Left cardiac atrium (tissue), 4 donors: ENCODE measurements at regions of chr1 and their contacts with region 1.

Region 1: DNA sequence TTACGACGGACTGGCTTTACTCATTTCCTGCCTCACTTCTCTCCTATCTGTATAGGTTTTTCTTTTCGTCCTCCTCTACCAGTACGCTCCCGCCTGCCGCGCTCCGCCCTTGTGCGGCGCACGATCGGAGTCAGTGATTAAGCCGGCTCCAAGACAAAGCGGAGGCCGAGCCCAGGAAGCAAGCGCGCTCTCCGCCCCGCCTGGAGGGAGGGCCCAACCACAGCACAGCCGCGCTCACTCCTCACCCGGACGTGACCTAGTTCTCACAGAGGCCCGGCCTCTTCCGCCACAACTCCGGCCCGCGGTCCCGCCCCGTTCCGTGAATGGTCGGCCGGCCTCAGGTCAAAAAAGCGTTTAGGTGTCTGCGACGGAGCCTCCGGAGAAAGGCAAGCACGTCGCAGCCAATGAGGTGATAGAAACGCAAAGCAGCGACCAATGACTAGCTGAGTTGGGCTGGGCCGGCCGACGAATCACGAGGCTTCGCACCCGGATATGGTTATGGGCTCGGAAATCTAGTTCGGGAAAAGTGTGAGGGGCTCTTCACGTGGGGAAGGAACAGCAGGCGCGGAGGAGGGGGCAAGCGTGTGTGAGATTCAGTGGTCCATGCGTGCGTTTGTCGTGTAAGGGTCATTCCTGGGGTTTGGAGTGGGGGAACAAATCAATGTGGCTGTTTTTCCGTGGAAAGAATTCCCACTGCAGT is at the start of gene METTL13:
- DNase-seq: peak; percentile 99
- ATAC-seq: peak; percentile 99 to 100
- total RNA-seq, gene METTL13: 13.0 to 16.2 TPM

Region 2: GRCh38 chr1:171654942-171655745 is 126.2 kb before region 1 on chr1:
- intact Hi-C with region 1: no loop called
- DNase-seq: peak; percentile 85
- ATAC-seq: peak; percentile 83 to 89

Region 3: GRCh38 chr1:171741872-171742576 is 39.3 kb before region 1 on chr1 and contains the start of gene VAMP4:
- intact Hi-C with region 1: loop called in 1 of 2 experiments (anchors 2 kb)
- DNase-seq: peak; percentile 90
- ATAC-seq: peak; percentile 92 to 95
- total RNA-seq, gene VAMP4: 9.0 to 9.5 TPM

Region 4: DNA sequence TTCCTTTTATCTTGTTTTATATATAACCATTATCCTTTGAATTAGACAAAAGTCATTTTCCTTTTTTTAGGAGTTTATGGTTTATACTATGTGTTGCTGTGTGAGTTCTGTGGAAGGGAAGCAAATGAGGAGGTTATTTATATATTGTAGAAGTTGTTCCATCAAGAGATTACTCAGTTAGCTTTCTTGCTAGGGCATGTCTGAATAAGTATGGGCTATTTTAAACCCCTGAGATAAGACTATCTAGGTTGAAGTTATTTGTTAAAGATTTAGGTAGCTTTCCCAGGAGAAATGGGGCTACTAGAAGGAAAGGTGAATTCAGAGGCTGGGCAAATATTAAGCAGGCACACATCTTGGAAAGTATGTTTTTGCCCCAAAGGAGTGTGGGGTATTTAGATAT is 23.3 kb before region 1 on chr1:
- intact Hi-C with region 1: no loop called
- DNase-seq: no peak
- ATAC-seq: no peak

Region 5: DNA sequence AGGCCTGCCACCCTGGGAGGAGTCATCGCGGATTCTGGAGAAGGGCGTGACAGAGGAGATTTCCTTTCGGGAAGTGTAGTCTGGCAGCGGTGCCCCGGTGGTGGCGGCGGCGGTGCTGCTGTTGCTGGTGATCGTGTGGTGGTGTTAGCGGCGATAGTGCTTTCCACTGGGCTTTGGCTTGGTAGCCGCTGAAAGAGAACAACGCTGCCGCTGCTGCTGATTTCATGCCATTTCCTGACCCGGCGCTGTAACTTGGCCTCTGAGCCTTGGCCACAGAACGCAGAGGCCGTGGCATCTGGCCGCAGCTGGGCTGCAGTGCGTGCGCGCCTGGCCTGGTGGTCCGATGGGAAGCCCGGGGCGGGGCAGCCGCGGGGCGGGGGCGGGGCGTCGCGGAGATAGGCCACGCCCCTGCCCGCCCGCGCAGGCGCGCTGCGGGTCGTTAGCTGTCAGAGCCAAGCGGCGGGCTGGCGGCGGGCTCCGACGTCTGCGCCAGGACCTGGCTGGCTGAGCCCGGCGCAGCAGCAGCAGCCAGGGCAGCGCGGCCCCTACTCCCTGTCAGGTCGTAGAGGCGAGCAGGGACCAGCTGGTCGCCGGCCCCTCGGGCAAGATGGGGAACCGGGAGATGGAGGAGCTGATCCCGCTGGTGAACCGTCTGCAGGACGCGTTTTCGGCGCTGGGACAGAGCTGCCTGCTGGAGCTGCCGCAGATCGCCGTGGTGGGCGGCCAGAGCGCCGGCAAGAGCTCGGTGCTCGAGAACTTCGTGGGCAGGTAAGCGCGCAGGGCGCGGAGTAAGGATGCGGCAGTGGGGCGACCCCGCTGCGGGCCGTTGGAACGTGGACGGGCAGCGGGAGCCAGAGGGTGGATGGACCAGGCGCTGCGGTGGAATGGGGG is 60.0 kb after region 1 on chr1 and contains the start of gene DNM3:
- intact Hi-C with region 1: no loop called
- DNase-seq: peak; percentile 88
- ATAC-seq: peak; percentile 98 to 99
- total RNA-seq, gene DNM3: 1.1 to 2.8 TPM